Heart right ventricle (tissue), 16 donors: ENCODE measurements at regions of chr9 and their contacts with region 1.

Region 1: GRCh38 chr9:106945727-106946660 is 83.0 kb downstream of the ZNF462 start:
- DNase-seq: no peak
- ATAC-seq: peak in 2 of 8 donors; percentile 19 to 36
- H3K4me3 ChIP-seq: no peak overlapping the region
- H3K27ac ChIP-seq: peak overlapping the region in 2 of 10 donors; percentile 11 to 23
- H3K4me1 ChIP-seq: peaks cover 0 to 14% (median 8%) of the 10 kb centered on the region in 9 donors
- H3K27me3 ChIP-seq: no peaks in the 10 kb centered on the region
- CTCF ChIP-seq: no peak

Region 2: GRCh38 chr9:106878924-106879323 is 67.1 kb before region 1 on chr9:
- intact Hi-C with region 1: no loop called
- DNase-seq: peak; percentile 60 to 84
- ATAC-seq: peak; percentile 84 to 95 (median 93)
- H3K4me3 ChIP-seq: no peak overlapping the region
- H3K27ac ChIP-seq: peak overlapping the region; percentile 11 to 84 (median 68)
- H3K4me1 ChIP-seq: peaks cover 10 to 90% (median 69%) of the 10 kb centered on the region in 9 donors
- H3K27me3 ChIP-seq: no peaks in the 10 kb centered on the region
- CTCF ChIP-seq: no peak

Region 3: DNA sequence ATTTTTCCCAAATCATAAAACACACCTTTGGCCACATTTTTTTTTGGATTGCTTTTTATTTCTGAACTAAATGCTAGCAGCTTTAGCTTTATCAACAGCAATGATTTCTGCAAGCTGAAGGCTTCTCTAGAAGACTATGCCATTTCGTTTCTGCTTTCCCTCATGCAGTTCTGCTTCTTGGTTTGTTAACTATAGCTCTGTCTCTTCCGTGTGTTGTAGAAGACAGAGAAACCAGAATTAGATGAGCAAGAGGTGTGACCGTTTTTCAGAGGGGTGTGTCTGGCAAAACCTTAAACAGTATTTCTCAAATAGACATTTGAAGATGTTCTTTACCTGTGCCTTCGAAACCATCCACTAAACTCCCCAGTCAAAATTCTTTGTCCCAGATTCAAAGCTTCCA is 48.5 kb after region 1 on chr9:
- intact Hi-C with region 1: loop called in 1 of 10 experiments (anchors 5 kb)
- DNase-seq: no peak
- ATAC-seq: no peak
- H3K4me3 ChIP-seq: no peak overlapping the region
- H3K27ac ChIP-seq: no peak overlapping the region
- H3K4me1 ChIP-seq: no peaks in the 10 kb centered on the region
- H3K27me3 ChIP-seq: no peaks in the 10 kb centered on the region
- CTCF ChIP-seq: no peak

Region 4: DNA sequence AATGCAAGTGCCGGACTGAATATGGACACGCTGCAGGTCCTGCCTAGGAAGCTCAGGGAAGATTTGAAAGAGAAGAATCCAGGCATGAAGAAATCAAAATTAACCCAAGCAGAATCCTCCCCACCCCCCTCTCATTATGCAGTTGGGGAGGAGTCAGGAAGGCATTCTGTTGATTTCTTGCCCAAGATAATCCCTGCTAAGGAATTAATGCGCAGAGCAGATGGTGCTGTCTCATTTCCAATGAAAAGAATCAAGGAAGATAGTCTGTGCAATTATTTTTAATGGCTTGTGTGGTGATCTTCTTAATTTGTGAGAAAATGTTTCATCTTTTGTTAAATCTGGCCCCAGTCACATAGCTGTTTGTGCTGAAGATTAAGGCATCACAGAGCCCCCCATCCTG is 62.0 kb after region 1 on chr9:
- intact Hi-C with region 1: loop called in 1 of 10 experiments (anchors 10 kb)
- DNase-seq: no peak
- ATAC-seq: peak in 2 of 8 donors; percentile 9 to 38
- H3K4me3 ChIP-seq: no peak overlapping the region
- H3K27ac ChIP-seq: peak overlapping the region in 1 of 10 donors; percentile 30
- H3K4me1 ChIP-seq: peaks cover 0 to 7% (median 0%) of the 10 kb centered on the region in 9 donors
- H3K27me3 ChIP-seq: no peaks in the 10 kb centered on the region
- CTCF ChIP-seq: no peak